Activated T-helper 1 cell treated with anti-CD3 and anti-CD28 coated beads, Interleukin-12 subunit alpha, Interleukin-12 subunit beta, Interleukin-2, Interleukin-4 antibody, amounts not matched to agents 30 ng/mL and 10 ng/mL and 1 ng/mL, durations not matched to agents 14 hours and 24 hours and 36 hours (primary cell): ENCODE measurements at regions of chr1 and their contacts with region 1.

Region 1: GRCh38 chr1:153532769-153533599 is 2.8 kb downstream of the S100A6 start:
- DNase-seq: peak; percentile 72
- H3K4me3 Mint-ChIP-seq: peak overlapping the region; percentile 91
- H3K27ac Mint-ChIP-seq: peak overlapping the region; percentile 83
- H3K4me1 Mint-ChIP-seq: peaks cover 62% of the 10 kb centered on the region
- H3K27me3 Mint-ChIP-seq: no peaks in the 10 kb centered on the region

Region 2: GRCh38 chr1:153355468-153356071 is 177.4 kb before region 1 on chr1:
- intact Hi-C with region 1: no loop called
- DNase-seq: peak; percentile 38
- H3K4me3 Mint-ChIP-seq: no peak overlapping the region
- H3K27ac Mint-ChIP-seq: no peak overlapping the region
- H3K4me1 Mint-ChIP-seq: peaks cover 28% of the 10 kb centered on the region
- H3K27me3 Mint-ChIP-seq: peaks cover 14% of the 10 kb centered on the region

Region 3: DNA sequence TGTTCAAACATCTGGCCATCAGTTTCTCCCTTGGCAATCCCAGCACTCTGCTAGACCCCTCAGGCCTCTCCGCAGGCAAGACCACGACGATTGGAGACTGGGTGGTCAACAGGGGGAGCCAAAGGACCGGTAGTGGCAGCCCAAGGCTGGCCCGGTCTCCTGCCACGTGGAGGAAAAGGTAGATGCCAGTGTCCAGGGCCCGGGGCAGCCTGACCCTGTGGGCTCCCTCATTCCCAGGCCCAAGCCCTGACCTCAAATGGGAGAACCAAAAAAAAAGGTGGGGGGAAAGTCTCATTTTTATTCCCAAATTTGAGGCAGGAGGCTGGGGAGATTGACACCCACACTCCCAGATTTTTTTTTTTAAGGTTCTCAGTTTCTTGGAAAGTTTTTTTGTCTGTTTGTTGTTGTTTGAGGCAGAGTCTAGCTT is 22.0 kb before region 1 on chr1:
- intact Hi-C with region 1: loop called (anchors 1 kb)
- DNase-seq: peak; percentile 65
- H3K4me3 Mint-ChIP-seq: no peak overlapping the region
- H3K27ac Mint-ChIP-seq: peak overlapping the region; percentile 55
- H3K4me1 Mint-ChIP-seq: peaks cover 21% of the 10 kb centered on the region
- H3K27me3 Mint-ChIP-seq: peaks cover 2% of the 10 kb centered on the region

Region 4: GRCh38 chr1:153545067-153546055 is 12.4 kb after region 1 on chr1 and contains the start of gene S100A4:
- intact Hi-C with region 1: loop called (anchors 1 kb)
- DNase-seq: peak; percentile 93
- H3K4me3 Mint-ChIP-seq: peak within 1 kb of the TSS; percentile 90
- H3K27ac Mint-ChIP-seq: peak within 1 kb of the TSS; percentile 99
- H3K4me1 Mint-ChIP-seq: peaks cover 83% of the 10 kb centered on the region
- H3K27me3 Mint-ChIP-seq: peaks cover 2% of the 10 kb centered on the region
- total RNA-seq, gene S100A4: 165 and 167 TPM in 2 replicates

Region 5: DNA sequence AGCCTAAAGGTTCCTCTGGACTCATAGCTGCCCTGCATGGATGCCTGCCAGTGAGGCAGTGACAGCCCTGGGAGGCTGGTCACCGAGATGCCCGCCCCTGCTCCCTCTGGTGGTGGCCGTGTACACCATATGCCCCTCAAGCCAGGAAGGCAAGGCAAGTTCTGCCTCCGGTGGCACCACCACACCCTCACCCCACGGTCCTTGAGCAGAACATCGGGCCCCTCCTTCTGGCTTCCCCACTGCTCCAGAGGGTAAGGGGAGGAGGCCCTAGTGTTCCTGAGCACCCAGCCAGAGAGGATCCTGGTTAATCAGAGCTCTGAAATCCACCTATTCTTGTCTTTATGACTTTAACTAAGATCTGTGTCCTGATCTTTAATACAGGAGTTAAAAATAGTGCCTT is 84.7 kb after region 1 on chr1:
- intact Hi-C with region 1: loop called (anchors 1 kb)
- DNase-seq: peak; percentile 63
- H3K4me3 Mint-ChIP-seq: no peak overlapping the region
- H3K27ac Mint-ChIP-seq: no peak overlapping the region
- H3K4me1 Mint-ChIP-seq: peaks cover 8% of the 10 kb centered on the region
- H3K27me3 Mint-ChIP-seq: no peaks in the 10 kb centered on the region

Region 6: GRCh38 chr1:153633716-153634665 is 101.0 kb after region 1 on chr1 and contains the start of gene CHTOP:
- intact Hi-C with region 1: loop called (anchors 1 kb)
- DNase-seq: peak; percentile 96
- H3K4me3 Mint-ChIP-seq: peak within 1 kb of the TSS; percentile 97
- H3K27ac Mint-ChIP-seq: peak within 1 kb of the TSS; percentile 100
- H3K4me1 Mint-ChIP-seq: peaks cover 45% of the 10 kb centered on the region
- H3K27me3 Mint-ChIP-seq: no peaks in the 10 kb centered on the region
- total RNA-seq, gene CHTOP: 101 and 105 TPM in 2 replicates

Region 7: GRCh38 chr1:153658400-153659174 is 125.6 kb after region 1 on chr1 and contains the start of gene SNAPIN:
- intact Hi-C with region 1: loop called (anchors 1 kb)
- DNase-seq: peak; percentile 90
- H3K4me3 Mint-ChIP-seq: peak within 1 kb of the TSS; percentile 96
- H3K27ac Mint-ChIP-seq: peak within 1 kb of the TSS; percentile 84
- H3K4me1 Mint-ChIP-seq: peaks cover 11% of the 10 kb centered on the region
- H3K27me3 Mint-ChIP-seq: no peaks in the 10 kb centered on the region
- total RNA-seq, gene SNAPIN: 31.1 and 35.4 TPM in 2 replicates

Region 8: DNA sequence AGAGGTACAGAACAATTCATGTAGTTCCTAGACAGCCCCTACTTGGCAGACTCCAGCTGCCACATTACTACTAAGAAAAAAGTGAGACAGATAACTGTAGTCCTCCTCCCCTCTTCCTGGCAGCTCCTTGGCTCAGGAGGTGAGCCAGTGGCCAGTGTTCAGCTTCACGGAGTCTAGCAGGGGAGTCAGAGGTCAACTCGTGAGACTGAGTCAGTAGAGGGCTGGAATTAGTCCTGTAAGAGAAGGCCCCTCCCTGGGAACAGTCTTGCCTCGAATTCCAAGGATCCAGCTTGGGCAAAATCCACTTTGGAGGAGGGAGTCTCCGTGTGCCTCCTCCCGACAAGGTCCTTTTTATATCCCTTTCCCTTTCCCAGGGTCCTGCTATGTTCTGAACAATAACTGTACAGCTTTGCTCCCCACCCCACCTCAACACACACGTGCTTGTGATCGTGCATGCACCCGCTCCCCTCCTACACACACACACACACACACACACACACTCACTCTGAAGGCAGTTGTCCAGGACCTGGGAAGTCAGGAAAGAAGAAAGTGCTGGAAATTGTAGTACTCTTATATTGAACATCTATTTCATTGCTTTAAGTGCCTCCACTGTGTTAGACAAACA is 219.7 kb after region 1 on chr1:
- intact Hi-C with region 1: no loop called
- DNase-seq: no peak
- H3K4me3 Mint-ChIP-seq: no peak overlapping the region
- H3K27ac Mint-ChIP-seq: no peak overlapping the region
- H3K4me1 Mint-ChIP-seq: peaks cover 7% of the 10 kb centered on the region
- H3K27me3 Mint-ChIP-seq: no peaks in the 10 kb centered on the region